HEK293 (cell line): ENCODE measurements at regions of chr3 and their contacts with region 1.

Region 1: GRCh38 chr3:56185827-56186226 is 282.4 kb downstream of the ERC2 start:
- H3K4me3 ChIP-seq: no peak overlapping the region
- H3K27ac ChIP-seq: no peak overlapping the region
- H3K4me1 ChIP-seq: no peaks in the 10 kb centered on the region
- CTCF ChIP-seq: no peak

Region 2: DNA sequence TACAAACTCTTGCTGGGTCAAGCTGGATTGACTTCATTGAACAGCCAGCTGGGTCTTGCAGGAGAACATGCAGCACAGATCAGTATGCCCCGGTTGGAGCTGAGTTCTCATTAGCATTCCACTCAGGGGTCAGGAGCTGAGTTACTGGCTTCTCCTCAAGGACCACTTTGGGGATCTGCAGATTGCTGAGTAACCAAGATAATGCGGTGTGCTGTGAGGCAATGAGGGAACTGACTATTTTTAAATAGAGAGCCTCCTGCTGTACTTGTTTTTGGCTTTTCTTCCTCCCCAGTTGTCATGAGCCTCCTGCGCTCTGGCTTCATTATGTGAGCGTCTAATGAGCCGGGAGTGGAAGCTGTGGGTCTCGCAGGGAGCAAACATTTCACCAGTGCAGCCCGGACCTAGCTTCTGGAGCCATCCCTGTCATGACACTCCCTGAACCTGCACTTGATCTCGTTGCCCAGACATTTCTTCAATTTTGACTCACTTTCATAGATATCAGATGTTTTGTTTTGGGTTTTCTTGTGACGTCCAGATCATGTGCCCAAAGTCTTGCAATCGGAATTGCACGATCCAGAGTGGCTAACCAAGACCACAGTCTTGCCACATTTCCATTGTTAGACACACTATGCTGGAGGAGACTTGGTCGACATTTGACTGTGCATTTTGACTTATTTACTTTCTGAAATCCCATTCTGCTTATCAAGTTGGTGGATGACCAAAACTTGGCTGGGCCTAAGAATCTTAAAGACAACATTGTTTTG is 1585.2 kb before region 1 on chr3:
- CTCF ChIA-PET with region 1: no interaction called
- POLR2A ChIA-PET with region 1: interaction called, 10 read pairs
- H3K4me3 ChIP-seq: no peak overlapping the region
- H3K27ac ChIP-seq: no peak overlapping the region
- H3K4me1 ChIP-seq: no peaks in the 10 kb centered on the region
- CTCF ChIP-seq: no peak

Region 3: DNA sequence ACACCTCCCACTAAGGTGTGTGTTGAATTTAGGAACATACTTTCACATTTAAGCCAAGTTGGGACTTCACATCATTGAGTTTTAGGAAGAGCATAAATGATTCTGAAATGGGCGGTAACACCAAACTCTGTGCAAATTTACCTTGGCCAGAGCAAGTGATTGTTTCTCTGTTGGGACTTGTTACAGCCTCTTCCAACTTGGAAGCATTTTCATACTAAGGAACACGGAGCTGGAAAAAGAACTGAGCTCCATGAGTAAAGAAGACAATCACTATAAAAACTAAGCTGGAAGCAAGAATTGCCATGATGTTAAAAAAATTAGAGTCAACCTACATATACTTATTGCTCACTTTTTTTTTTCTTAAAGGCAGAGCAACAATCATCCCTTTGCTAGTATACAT is 88.8 kb before region 1 on chr3:
- CTCF ChIA-PET with region 1: no interaction called
- POLR2A ChIA-PET with region 1: no interaction called
- H3K4me3 ChIP-seq: no peak overlapping the region
- H3K27ac ChIP-seq: no peak overlapping the region
- H3K4me1 ChIP-seq: no peaks in the 10 kb centered on the region
- CTCF ChIP-seq: no peak

Region 4: DNA sequence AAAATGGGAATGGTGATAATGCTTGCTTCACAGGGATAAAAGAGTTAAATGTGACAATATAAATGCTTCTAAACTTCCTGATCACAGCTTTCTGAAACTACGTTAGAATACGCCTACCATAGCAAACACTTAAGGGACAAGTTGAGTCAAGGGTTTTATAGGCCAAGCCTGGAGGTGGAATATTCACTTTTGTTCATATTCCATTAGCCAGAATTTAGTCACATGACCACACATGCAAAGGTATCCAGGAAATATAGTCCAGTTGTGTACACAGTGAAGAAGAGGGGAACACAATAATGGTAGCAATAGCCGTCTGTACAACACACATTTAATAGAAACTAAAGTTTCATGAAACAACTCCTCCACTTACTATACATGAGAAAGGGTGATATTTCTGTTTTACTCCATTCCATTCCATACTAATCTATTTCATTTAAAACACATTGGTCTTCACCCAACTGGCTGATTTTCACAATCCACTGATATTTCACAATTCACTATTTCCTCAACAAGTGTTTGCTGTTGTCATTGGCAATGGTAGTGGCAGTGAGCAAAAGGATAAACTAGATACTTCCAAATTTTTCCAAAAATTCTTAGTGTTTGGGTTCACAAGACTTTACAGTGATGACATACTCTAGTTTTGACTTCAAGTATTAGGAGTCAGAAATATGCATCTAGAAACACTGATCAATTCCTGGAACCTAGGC is 11.6 kb after region 1 on chr3:
- CTCF ChIA-PET with region 1: no interaction called
- POLR2A ChIA-PET with region 1: no interaction called
- H3K4me3 ChIP-seq: no peak overlapping the region
- H3K27ac ChIP-seq: no peak overlapping the region
- H3K4me1 ChIP-seq: no peaks in the 10 kb centered on the region; the same call in 1 of the 2 replicates
- CTCF ChIP-seq: no peak